H1 (cell line): ENCODE measurements at regions of chr11 and their contacts with region 1.

Region 1: DNA sequence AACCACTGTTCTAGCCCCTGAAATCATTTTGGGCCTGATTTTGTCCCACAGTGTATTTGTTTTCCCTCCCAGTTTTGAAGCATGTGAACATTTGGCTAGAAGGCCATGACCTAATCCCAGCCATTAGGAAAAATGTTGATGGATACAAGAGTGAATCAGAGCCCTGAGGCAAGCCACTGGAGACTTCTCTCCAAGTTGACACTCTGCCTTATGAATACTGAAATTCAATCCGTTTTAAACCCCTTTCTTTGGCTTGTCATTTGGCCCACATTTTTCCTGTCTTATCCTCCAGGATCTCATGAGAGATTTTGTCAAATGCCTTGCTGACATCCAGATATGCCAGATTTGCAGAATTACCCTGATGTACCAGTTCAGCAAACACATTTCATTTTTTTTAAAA is 158.8 kb downstream of the FAT3 start:
- DNase-seq: no peak
- H3K4me3 ChIP-seq: no peak overlapping the region
- H3K27ac ChIP-seq: no peak overlapping the region
- H3K4me1 ChIP-seq: peaks cover 0 to 5% (median 0%) of the 10 kb centered on the region in 4 experiments; a peak in 4 of 7 replicates
- H3K27me3 ChIP-seq: no peaks in the 10 kb centered on the region
- CTCF ChIP-seq: no peak
- EP300 ChIP-seq: no peak
- POLR2A ChIP-seq: no peak
- RAD21 ChIP-seq: no peak

Region 2: GRCh38 chr11:92362989-92363388 is 20.4 kb before region 1 on chr11:
- CTCF ChIA-PET with region 1: interaction called, 11 read pairs
- POLR2A ChIA-PET with region 1: no interaction called
- DNase-seq: no peak
- H3K4me3 ChIP-seq: no peak overlapping the region
- H3K27ac ChIP-seq: no peak overlapping the region
- H3K4me1 ChIP-seq: 0 out of 7 replicates have a peak, but pooled peaks cover 0 to 2% (median 0%) of the 10 kb centered on the region in 4 experiments
- H3K27me3 ChIP-seq: no peaks in the 10 kb centered on the region
- CTCF ChIP-seq: no peak
- EP300 ChIP-seq: no peak
- POLR2A ChIP-seq: no peak
- RAD21 ChIP-seq: no peak

Region 3: DNA sequence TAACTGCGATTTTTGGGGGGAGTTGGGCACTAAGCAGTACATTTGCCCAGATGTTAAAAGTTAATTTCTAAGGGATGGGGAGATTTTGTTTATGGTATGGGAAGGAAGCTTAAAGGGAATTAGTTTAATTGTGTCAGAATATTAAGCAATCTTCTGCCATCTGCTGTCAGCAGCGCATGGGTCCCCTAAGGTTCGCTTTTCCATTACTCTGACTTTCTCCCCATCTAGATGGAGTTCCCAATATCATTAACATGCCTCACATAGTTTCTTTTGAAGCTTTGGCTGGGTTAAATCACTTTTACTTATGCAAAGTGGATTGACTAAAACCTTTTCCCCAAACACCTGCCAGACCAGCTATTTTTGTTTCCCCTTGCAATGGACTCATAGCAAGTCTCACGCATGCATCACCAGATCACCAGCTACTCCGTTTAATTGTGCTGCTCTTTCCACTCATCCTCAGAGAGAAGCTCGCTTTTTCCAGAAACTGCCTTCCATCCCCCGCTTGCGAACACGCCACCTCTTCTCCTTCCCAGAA is 13.9 kb after region 1 on chr11:
- CTCF ChIA-PET with region 1: interaction called, 84 read pairs
- POLR2A ChIA-PET with region 1: no interaction called
- DNase-seq: no peak
- H3K4me3 ChIP-seq: no peak overlapping the region
- H3K27ac ChIP-seq: no peak overlapping the region
- H3K4me1 ChIP-seq: peaks cover 2 to 7% (median 3%) of the 10 kb centered on the region in 4 experiments; a peak in 4 of 7 replicates
- H3K27me3 ChIP-seq: no peaks in the 10 kb centered on the region
- CTCF ChIP-seq: 0 out of 4 replicates have a peak, but pooled peaks of 1 of the 3 experiments have one; percentile 3
- EP300 ChIP-seq: no peak
- POLR2A ChIP-seq: no peak
- RAD21 ChIP-seq: peak; percentile 13 to 33; a peak in 3 of 4 replicates

Region 4: GRCh38 chr11:92473736-92474135 is 90.3 kb after region 1 on chr11:
- CTCF ChIA-PET with region 1: no interaction called
- POLR2A ChIA-PET with region 1: no interaction called
- DNase-seq: no peak
- H3K4me3 ChIP-seq: no peak overlapping the region
- H3K27ac ChIP-seq: no peak overlapping the region
- H3K4me1 ChIP-seq: no peaks in the 10 kb centered on the region
- H3K27me3 ChIP-seq: no peaks in the 10 kb centered on the region
- CTCF ChIP-seq: no peak
- EP300 ChIP-seq: no peak
- POLR2A ChIP-seq: no peak
- RAD21 ChIP-seq: no peak

Region 5: DNA sequence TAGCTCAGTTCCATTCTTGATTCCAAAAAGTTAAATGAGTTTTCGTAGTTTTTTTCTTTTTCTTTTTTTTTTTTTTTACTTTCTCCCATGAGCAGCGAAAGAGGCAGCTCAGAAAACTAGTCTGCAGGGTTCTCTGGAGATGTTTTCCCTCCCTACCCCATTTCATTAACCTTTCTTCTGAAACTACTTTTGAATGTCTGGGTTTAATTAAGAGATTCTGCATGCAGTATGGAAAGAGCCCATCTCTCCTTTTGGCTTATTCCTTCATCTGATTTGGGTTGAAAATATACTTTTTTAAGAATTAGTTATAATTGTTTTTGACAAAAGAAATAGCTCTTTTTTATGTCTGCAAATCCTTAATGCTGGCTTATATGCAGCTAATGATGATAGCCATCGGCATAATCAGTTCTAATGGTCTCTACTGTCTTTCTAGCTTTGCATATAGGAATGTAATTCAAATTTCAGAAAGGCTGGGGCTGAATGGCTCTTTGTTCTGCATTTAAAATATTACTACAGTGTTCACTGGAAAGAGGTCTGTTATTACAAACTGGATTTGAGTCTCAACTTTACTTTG is 106.5 kb after region 1 on chr11:
- CTCF ChIA-PET with region 1: interaction called, 13 read pairs
- POLR2A ChIA-PET with region 1: no interaction called
- DNase-seq: no peak
- H3K4me3 ChIP-seq: no peak overlapping the region
- H3K27ac ChIP-seq: no peak overlapping the region
- H3K4me1 ChIP-seq: no peaks in the 10 kb centered on the region; a peak in 1 of 7 replicates
- H3K27me3 ChIP-seq: no peaks in the 10 kb centered on the region; a peak in 1 of 7 replicates
- CTCF ChIP-seq: no peak
- EP300 ChIP-seq: no peak
- POLR2A ChIP-seq: no peak
- RAD21 ChIP-seq: no peak

Region 6: DNA sequence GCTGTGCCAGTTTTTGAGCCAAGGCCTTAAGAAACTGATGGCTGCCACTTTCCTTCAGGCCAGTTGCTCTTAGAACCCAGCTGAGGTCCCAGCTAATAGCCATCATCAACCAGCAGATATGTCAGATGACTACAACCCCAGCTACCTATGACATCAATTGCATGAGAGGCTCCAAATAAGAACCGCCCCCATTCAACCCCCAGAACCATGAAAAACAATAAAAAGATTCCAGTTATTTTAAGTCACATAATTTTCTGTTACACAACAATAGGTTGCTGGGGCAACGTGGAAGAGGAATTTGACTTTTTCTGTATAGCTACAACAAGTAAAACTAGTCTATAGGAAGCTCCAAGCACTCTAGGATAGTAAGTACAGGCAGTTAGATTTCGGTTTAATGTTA is 369.7 kb after region 1 on chr11:
- CTCF ChIA-PET with region 1: no interaction called
- POLR2A ChIA-PET with region 1: no interaction called
- DNase-seq: no peak
- H3K4me3 ChIP-seq: no peak overlapping the region
- H3K27ac ChIP-seq: no peak overlapping the region
- H3K4me1 ChIP-seq: no peaks in the 10 kb centered on the region
- H3K27me3 ChIP-seq: no peaks in the 10 kb centered on the region
- CTCF ChIP-seq: no peak
- EP300 ChIP-seq: no peak
- POLR2A ChIP-seq: no peak
- RAD21 ChIP-seq: no peak